ENCODE measurements at regions of chr2 and their contacts with region 1.

Region 1: GRCh38 chr2:113370478-113371091 is 66.9 kb upstream of the ZNG1B start:
- DNase-seq: peak; percentile 83
- H3K4me3 ChIP-seq: no peak overlapping the region
- H3K27ac ChIP-seq: no peak overlapping the region
- H3K4me1 ChIP-seq: no peaks in the 10 kb centered on the region
- H3K27me3 ChIP-seq: no peaks in the 10 kb centered on the region

Region 2: GRCh38 chr2:113203901-113204519 is 166.6 kb before region 1 on chr2:
- in situ Hi-C with region 1: loop called (anchors 10 kb)
- DNase-seq: peak; percentile 75
- H3K4me3 ChIP-seq: no peak overlapping the region
- H3K27ac ChIP-seq: no peak overlapping the region
- H3K4me1 ChIP-seq: peaks cover 11% of the 10 kb centered on the region
- H3K27me3 ChIP-seq: no peaks in the 10 kb centered on the region

Region 3: GRCh38 chr2:113273027-113273551 is 97.5 kb before region 1 on chr2:
- in situ Hi-C with region 1: loop called (anchors 25 kb)
- DNase-seq: peak; percentile 46
- H3K4me3 ChIP-seq: no peak overlapping the region
- H3K27ac ChIP-seq: no peak overlapping the region
- H3K4me1 ChIP-seq: no peaks in the 10 kb centered on the region
- H3K27me3 ChIP-seq: peaks cover 52% of the 10 kb centered on the region